HepG2 (cell line): ENCODE measurements at regions of chr6 and their contacts with region 1.

Region 1: GRCh38 chr6:27126815-27127537 is 120.5 kb upstream of the PRSS16 start:
- DNase-seq: peak; percentile 85
- ATAC-seq: peak; percentile 97
- H3K4me3 ChIP-seq: peak overlapping the region; percentile 45 to 51 (median 47)
- H3K27ac ChIP-seq: no peak overlapping the region
- H3K4me1 ChIP-seq: peaks cover 20% of the 10 kb centered on the region
- H3K27me3 ChIP-seq: peaks cover 2 to 16% of the 10 kb centered on the region in 2 experiments; a peak in 4 of 5 replicates
- CTCF ChIP-seq: peak; percentile 96
- EP300 ChIP-seq: no peak
- POLR2A ChIP-seq: no peak
- RAD21 ChIP-seq: peak; percentile 88

Region 2: GRCh38 chr6:27157459-27158315 is 30.7 kb after region 1 on chr6:
- CTCF ChIA-PET with region 1: interaction called, 21 read pairs
- POLR2A ChIA-PET with region 1: no interaction called
- in situ Hi-C with region 1: no loop called
- intact Hi-C with region 1: loop called (anchors 1 kb)
- DNase-seq: peak; percentile 47
- ATAC-seq: peak; percentile 79
- H3K4me3 ChIP-seq: peak overlapping the region; percentile 27 to 61 (median 50)
- H3K27ac ChIP-seq: no peak overlapping the region
- H3K4me1 ChIP-seq: peaks cover 22% of the 10 kb centered on the region
- H3K27me3 ChIP-seq: no peaks in the 10 kb centered on the region; a peak in 1 of 5 replicates
- CTCF ChIP-seq: peak; percentile 82
- EP300 ChIP-seq: no peak
- POLR2A ChIP-seq: no peak
- RAD21 ChIP-seq: no peak

Region 3: GRCh38 chr6:27177485-27178406 is 50.8 kb after region 1 on chr6:
- CTCF ChIA-PET with region 1: no interaction called
- POLR2A ChIA-PET with region 1: interaction called, 4 read pairs
- in situ Hi-C with region 1: no loop called
- intact Hi-C with region 1: loop called (anchors 5 kb)
- DNase-seq: peak; percentile 65
- ATAC-seq: peak; percentile 91
- H3K4me3 ChIP-seq: peak overlapping the region; percentile 86 to 100 (median 97)
- H3K27ac ChIP-seq: peak overlapping the region; percentile 50
- H3K4me1 ChIP-seq: peaks cover 18% of the 10 kb centered on the region
- H3K27me3 ChIP-seq: peaks cover 0 to 12% of the 10 kb centered on the region in 2 experiments; a peak in 2 of 5 replicates
- CTCF ChIP-seq: peak; percentile 58
- EP300 ChIP-seq: no peak
- POLR2A ChIP-seq: no peak
- RAD21 ChIP-seq: peak; percentile 61

Region 4: GRCh38 chr6:27370391-27370790 is 243.4 kb after region 1 on chr6:
- CTCF ChIA-PET with region 1: no interaction called
- POLR2A ChIA-PET with region 1: no interaction called
- in situ Hi-C with region 1: no loop called
- intact Hi-C with region 1: no loop called
- DNase-seq: no peak
- ATAC-seq: no peak
- H3K4me3 ChIP-seq: no peak overlapping the region
- H3K27ac ChIP-seq: no peak overlapping the region
- H3K4me1 ChIP-seq: peaks cover 11% of the 10 kb centered on the region; the same call in 1 of the 2 replicates
- H3K27me3 ChIP-seq: peaks cover 0 to 8% of the 10 kb centered on the region in 2 experiments
- CTCF ChIP-seq: no peak
- EP300 ChIP-seq: no peak
- POLR2A ChIP-seq: no peak
- RAD21 ChIP-seq: no peak